ENCODE measurements at regions of chr7 and their contacts with region 1.

Region 1: GRCh38 chr7:127585044-127585953 is at the start of gene GCC1:
- DNase-seq: peak; percentile 87 to 91
- H3K4me3 ChIP-seq: peak within 1 kb of the TSS; percentile 59 to 95 (median 89)
- H3K27ac ChIP-seq: peak within 1 kb of the TSS; percentile 57 to 70 (median 67)
- H3K4me1 ChIP-seq: peaks cover 37 to 44% of the 10 kb centered on the region in 2 donors
- H3K27me3 ChIP-seq: no peaks in the 10 kb centered on the region
- CTCF ChIP-seq: no peak
- POLR2A ChIP-seq: peak in 1 of 2 donors; percentile 93
- total RNA-seq, gene GCC1: 15.2 to 19.7 (median 18.0) TPM

Region 2: GRCh38 chr7:127392566-127393367 is 192.5 kb before region 1 on chr7 and contains the start of gene ZNF800:
- intact Hi-C with region 1: loop called (anchors 5 kb)
- DNase-seq: peak; percentile 92 to 93
- H3K4me3 ChIP-seq: peak within 1 kb of the TSS; percentile 90 to 96 (median 93)
- H3K27ac ChIP-seq: peak within 1 kb of the TSS; percentile 87 to 94 (median 91)
- H3K4me1 ChIP-seq: peaks cover 6 to 21% of the 10 kb centered on the region in 2 donors
- H3K27me3 ChIP-seq: no peaks in the 10 kb centered on the region
- CTCF ChIP-seq: peak in 1 of 6 experiments; percentile 6
- POLR2A ChIP-seq: peak; percentile 77 to 95
- total RNA-seq, gene ZNF800: 27.1 to 61.6 (median 36.2) TPM

Region 3: GRCh38 chr7:127651556-127652332 is 66.4 kb after region 1 on chr7 and contains the start of gene SND1:
- intact Hi-C with region 1: loop called (anchors 5 kb)
- DNase-seq: peak; percentile 100
- H3K4me3 ChIP-seq: peak within 1 kb of the TSS; percentile 63 to 92 (median 80)
- H3K27ac ChIP-seq: peak within 1 kb of the TSS; percentile 96 to 100 (median 96)
- H3K4me1 ChIP-seq: peaks cover 21 to 36% of the 10 kb centered on the region in 2 donors
- H3K27me3 ChIP-seq: no peaks in the 10 kb centered on the region
- CTCF ChIP-seq: no peak
- POLR2A ChIP-seq: peak; percentile 48 to 90
- total RNA-seq, gene SND1: 126 to 167 (median 144) TPM

Measured in thyroid gland (tissue), 4 donors.